Activated T-helper 2 cell treated with anti-CD3 and anti-CD28 coated beads, Interferon-gamma antibody, Interleukin-2, Interleukin-4, amounts not matched to agents 10 μg/mL and 5 μg/mL and 100 μg/mL, durations not matched to agents 14 hours and 24 hours and 36 hours (primary cell): ENCODE measurements at regions of chr1 and their contacts with region 1.

Region 1: DNA sequence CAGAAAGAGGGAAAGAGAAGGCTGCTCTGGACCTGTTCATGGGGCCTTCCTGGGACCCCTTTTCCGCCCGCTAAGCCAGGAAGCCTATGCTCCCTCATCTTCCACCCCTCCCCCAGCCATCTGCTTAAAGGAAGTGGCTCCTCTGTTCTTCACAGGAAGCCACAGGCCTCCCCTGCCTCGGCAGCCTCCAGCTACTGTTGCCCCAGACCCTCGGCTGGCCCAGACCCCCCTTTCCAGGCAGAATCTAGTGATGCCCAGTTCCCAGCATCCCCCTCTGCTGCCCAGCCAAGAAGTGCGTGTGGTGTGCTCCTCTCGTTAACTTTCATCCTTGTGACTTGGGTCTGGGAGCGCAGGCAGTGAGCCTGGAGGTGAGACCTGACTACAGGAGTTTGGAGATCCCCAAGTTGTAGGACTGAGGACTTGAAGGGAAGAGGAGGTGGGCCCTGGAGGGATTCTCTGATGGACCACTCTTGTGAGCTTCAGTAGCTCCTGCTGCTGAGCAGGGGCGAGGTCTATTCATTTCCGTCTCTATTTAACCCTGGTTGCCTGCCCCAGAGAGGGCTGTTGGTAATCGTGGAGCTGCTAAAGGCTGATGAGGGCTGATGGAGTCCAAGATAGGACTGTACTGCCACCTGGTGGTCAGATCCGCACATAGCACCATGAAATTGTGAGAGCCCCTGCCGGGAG is 9.1 kb downstream of the IFI6 start:
- DNase-seq: peak; percentile 85
- H3K4me3 Mint-ChIP-seq: peak overlapping the region; percentile 66
- H3K27ac Mint-ChIP-seq: peak overlapping the region; percentile 98
- H3K4me1 Mint-ChIP-seq: peaks cover 45% of the 10 kb centered on the region
- H3K27me3 Mint-ChIP-seq: no peaks in the 10 kb centered on the region

Region 2: GRCh38 chr1:27392096-27392777 is 270.6 kb before region 1 on chr1 and contains the start of gene GPR3:
- intact Hi-C with region 1: loop called (anchors 10 kb)
- DNase-seq: peak; percentile 90
- H3K4me3 Mint-ChIP-seq: peak within 1 kb of the TSS; percentile 82
- H3K27ac Mint-ChIP-seq: peak within 1 kb of the TSS; percentile 89
- H3K4me1 Mint-ChIP-seq: peaks cover 14% of the 10 kb centered on the region
- H3K27me3 Mint-ChIP-seq: peaks cover 6% of the 10 kb centered on the region
- total RNA-seq, gene GPR3: 3.7 and 3.9 TPM in 2 replicates

Region 3: GRCh38 chr1:27522432-27523351 is 140.2 kb before region 1 on chr1:
- intact Hi-C with region 1: loop called (anchors 2 kb)
- DNase-seq: peak; percentile 68
- H3K4me3 Mint-ChIP-seq: peak overlapping the region; percentile 92
- H3K27ac Mint-ChIP-seq: peak overlapping the region; percentile 96
- H3K4me1 Mint-ChIP-seq: peaks cover 59% of the 10 kb centered on the region
- H3K27me3 Mint-ChIP-seq: no peaks in the 10 kb centered on the region

Region 4: DNA sequence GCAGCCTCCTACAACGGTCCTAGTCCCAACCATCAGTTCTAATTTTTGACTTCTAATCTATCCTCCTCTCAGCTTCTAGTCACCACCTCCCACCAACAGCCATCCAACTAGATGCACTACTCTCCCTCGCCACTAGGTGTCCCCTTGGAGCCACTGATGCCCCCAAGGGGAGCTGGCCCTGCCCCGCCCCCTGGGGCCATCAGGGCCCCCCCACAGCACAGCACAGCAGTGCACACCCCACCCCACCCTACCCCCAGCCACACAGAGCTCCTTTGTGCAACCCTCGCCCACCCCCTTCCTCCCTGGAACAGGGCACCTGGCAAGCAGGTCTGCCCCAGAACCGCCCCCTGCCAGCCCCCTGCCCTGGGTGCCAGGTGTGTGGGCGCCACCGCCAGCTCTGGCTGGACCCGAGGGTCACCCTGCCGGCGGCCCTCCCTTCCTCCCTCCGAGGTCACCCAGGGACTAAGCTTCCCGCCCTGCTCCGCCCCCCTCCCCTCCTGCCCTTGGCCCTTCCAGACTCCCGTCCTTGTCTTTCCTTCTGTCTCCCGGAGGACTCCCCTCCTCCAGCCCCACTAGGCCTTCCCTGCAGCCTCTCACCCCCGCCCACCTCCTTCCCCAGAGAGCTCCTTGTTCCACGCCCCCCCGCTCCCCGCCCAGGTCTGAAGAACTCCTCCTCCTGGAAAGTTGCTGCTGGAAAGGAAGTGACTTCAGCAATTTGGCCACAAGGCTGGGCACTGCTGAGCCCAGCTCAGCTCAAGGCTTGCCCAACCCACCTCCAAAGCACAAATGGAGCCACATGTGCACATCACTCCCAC is 105.9 kb before region 1 on chr1:
- intact Hi-C with region 1: loop called (anchors 2 kb)
- DNase-seq: peak; percentile 71
- H3K4me3 Mint-ChIP-seq: no peak overlapping the region
- H3K27ac Mint-ChIP-seq: peak overlapping the region; percentile 76
- H3K4me1 Mint-ChIP-seq: peaks cover 24% of the 10 kb centered on the region
- H3K27me3 Mint-ChIP-seq: no peaks in the 10 kb centered on the region

Region 5: DNA sequence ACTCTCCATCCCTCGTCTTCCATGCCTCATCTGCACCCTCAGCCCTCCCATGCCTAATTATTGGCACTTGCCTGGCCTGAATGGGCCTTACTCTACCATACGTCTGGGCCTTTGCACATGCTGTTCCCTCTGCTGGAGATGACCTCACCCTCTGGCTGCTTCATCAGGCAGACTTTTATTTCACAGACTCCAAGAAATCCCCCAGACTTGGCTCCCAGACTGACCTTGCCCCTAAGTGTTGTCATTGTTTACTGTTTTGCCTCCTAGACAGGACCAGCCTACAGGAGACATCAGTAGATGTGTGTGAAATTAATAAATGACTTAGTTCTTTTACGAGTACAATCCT is 53.7 kb before region 1 on chr1:
- intact Hi-C with region 1: loop called (anchors 1 kb)
- DNase-seq: no peak
- H3K4me3 Mint-ChIP-seq: no peak overlapping the region
- H3K27ac Mint-ChIP-seq: no peak overlapping the region
- H3K4me1 Mint-ChIP-seq: peaks cover 23% of the 10 kb centered on the region
- H3K27me3 Mint-ChIP-seq: peaks cover 4% of the 10 kb centered on the region

Region 6: GRCh38 chr1:27632387-27633297 is 30.2 kb before region 1 on chr1:
- intact Hi-C with region 1: loop called (anchors 1 kb)
- DNase-seq: peak; percentile 30
- H3K4me3 Mint-ChIP-seq: peak overlapping the region; percentile 55
- H3K27ac Mint-ChIP-seq: peak overlapping the region; percentile 71
- H3K4me1 Mint-ChIP-seq: peaks cover 59% of the 10 kb centered on the region
- H3K27me3 Mint-ChIP-seq: no peaks in the 10 kb centered on the region

Region 7: GRCh38 chr1:27643701-27644625 is 18.9 kb before region 1 on chr1:
- intact Hi-C with region 1: loop called (anchors 2 kb)
- DNase-seq: peak; percentile 54
- H3K4me3 Mint-ChIP-seq: no peak overlapping the region
- H3K27ac Mint-ChIP-seq: no peak overlapping the region
- H3K4me1 Mint-ChIP-seq: peaks cover 16% of the 10 kb centered on the region
- H3K27me3 Mint-ChIP-seq: no peaks in the 10 kb centered on the region

Region 8: DNA sequence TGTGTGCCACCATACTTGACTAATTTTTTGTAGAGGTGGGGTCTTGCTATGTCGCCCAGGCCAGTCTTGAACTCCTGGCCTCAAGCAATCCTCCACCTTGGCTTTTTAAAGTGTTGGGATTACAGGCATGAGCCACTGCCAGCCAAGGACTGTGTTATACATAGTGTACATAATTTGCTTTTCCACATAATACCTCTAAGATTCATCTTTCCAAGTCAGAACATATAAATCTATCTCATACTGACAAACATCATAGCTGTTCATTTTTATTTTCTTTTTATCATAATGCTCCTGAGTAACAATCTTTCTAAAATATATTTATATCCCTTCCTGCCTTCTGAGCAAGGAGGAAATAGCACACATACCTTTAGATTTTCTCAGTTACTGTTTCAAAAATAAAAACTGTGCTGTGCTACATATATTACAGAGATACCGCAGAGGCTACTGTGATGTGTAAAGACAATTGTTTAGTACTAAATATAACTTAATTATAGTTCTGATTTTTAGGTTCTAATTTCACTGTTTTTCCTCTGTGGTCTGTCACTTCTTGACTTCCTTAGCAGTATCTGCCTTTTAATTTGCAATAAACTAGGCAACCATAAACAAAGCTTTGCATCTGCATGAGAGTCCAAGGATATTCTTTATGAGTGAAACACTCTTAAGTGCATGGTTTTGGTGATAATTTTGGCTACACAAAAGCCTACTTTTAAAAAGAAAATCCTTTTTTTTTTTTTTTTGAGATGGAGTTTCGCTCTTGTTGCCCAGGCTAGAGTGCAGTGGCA is 366.2 kb after region 1 on chr1:
- intact Hi-C with region 1: no loop called
- DNase-seq: no peak
- H3K4me3 Mint-ChIP-seq: no peak overlapping the region
- H3K27ac Mint-ChIP-seq: no peak overlapping the region
- H3K4me1 Mint-ChIP-seq: peaks cover 7% of the 10 kb centered on the region
- H3K27me3 Mint-ChIP-seq: no peaks in the 10 kb centered on the region